PC-3 (cell line): ENCODE measurements at regions of chr3 and their contacts with region 1.

Region 1: GRCh38 chr3:45760878-45761711 is 35.2 kb downstream of the SLC6A20 start:
- DNase-seq: peak; percentile 69
- ATAC-seq: peak; percentile 94
- H3K4me3 ChIP-seq: no peak overlapping the region
- H3K27ac ChIP-seq: no peak overlapping the region
- H3K4me1 ChIP-seq: 0 out of 2 replicates have a peak, but pooled peaks cover 7% of the 10 kb centered on the region
- H3K27me3 ChIP-seq: no peaks in the 10 kb centered on the region
- CTCF ChIP-seq: peak; percentile 91

Region 2: GRCh38 chr3:45528429-45528828 is 232.7 kb before region 1 on chr3:
- CTCF ChIA-PET with region 1: no interaction called
- POLR2A ChIA-PET with region 1: no interaction called
- intact Hi-C with region 1: no loop called
- DNase-seq: peak; percentile 45
- ATAC-seq: peak; percentile 90
- H3K4me3 ChIP-seq: no peak overlapping the region
- H3K27ac ChIP-seq: peak overlapping the region; percentile 37; the same call in 1 of the 2 replicates
- H3K4me1 ChIP-seq: peaks cover 12% of the 10 kb centered on the region; the same call in 1 of the 2 replicates
- H3K27me3 ChIP-seq: no peaks in the 10 kb centered on the region
- CTCF ChIP-seq: no peak

Region 3: GRCh38 chr3:45724911-45725310 is 36.2 kb before region 1 on chr3:
- CTCF ChIA-PET with region 1: no interaction called
- POLR2A ChIA-PET with region 1: no interaction called
- intact Hi-C with region 1: no loop called
- DNase-seq: no peak
- ATAC-seq: no peak
- H3K4me3 ChIP-seq: no peak overlapping the region
- H3K27ac ChIP-seq: no peak overlapping the region
- H3K4me1 ChIP-seq: no peaks in the 10 kb centered on the region
- H3K27me3 ChIP-seq: no peaks in the 10 kb centered on the region
- CTCF ChIP-seq: no peak

Region 4: GRCh38 chr3:45817831-45818522 is 56.9 kb after region 1 on chr3:
- CTCF ChIA-PET with region 1: no interaction called
- POLR2A ChIA-PET with region 1: interaction called, 15 read pairs
- intact Hi-C with region 1: loop called (anchors 1 kb)
- DNase-seq: peak; percentile 97
- ATAC-seq: peak; percentile 74
- H3K4me3 ChIP-seq: no peak overlapping the region; the same call in 1 of the 2 replicates
- H3K27ac ChIP-seq: peak overlapping the region; percentile 85
- H3K4me1 ChIP-seq: peaks cover 40% of the 10 kb centered on the region
- H3K27me3 ChIP-seq: no peaks in the 10 kb centered on the region
- CTCF ChIP-seq: no peak

Region 5: DNA sequence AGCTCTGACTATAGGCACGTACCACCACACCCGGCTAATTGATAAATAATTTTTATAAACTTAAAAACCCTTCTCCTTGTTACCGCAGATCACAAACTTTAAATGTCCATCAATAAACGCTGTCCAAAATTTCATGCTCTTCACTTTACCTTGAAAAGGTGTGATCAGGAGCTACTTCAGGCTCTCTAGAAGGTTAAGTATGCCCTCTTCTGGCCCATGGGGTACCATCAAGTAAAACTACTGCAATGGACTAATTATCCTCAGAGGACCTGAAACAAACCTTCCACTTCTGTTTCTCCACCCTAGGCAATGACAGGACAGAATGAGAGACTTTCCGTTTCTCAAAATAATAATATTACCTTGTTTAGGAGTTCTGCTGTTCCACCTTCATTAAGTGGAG is 71.6 kb after region 1 on chr3:
- CTCF ChIA-PET with region 1: interaction called, 41 read pairs
- POLR2A ChIA-PET with region 1: no interaction called
- intact Hi-C with region 1: loop called (anchors 1 kb)
- DNase-seq: peak; percentile 63
- ATAC-seq: peak; percentile 83
- H3K4me3 ChIP-seq: no peak overlapping the region
- H3K27ac ChIP-seq: no peak overlapping the region
- H3K4me1 ChIP-seq: no peaks in the 10 kb centered on the region
- H3K27me3 ChIP-seq: no peaks in the 10 kb centered on the region
- CTCF ChIP-seq: peak; percentile 66

Region 6: GRCh38 chr3:45861043-45861719 is 100.1 kb after region 1 on chr3:
- CTCF ChIA-PET with region 1: no interaction called
- POLR2A ChIA-PET with region 1: no interaction called
- intact Hi-C with region 1: no loop called
- DNase-seq: no peak
- ATAC-seq: peak; percentile 51
- H3K4me3 ChIP-seq: no peak overlapping the region
- H3K27ac ChIP-seq: no peak overlapping the region
- H3K4me1 ChIP-seq: no peaks in the 10 kb centered on the region
- H3K27me3 ChIP-seq: no peaks in the 10 kb centered on the region
- CTCF ChIP-seq: no peak

Region 7: GRCh38 chr3:45906681-45907407 is 145.7 kb after region 1 on chr3:
- CTCF ChIA-PET with region 1: no interaction called
- POLR2A ChIA-PET with region 1: no interaction called
- intact Hi-C with region 1: loop called (anchors 1 kb)
- DNase-seq: peak; percentile 63
- ATAC-seq: peak; percentile 95
- H3K4me3 ChIP-seq: no peak overlapping the region
- H3K27ac ChIP-seq: no peak overlapping the region
- H3K4me1 ChIP-seq: no peaks in the 10 kb centered on the region
- H3K27me3 ChIP-seq: no peaks in the 10 kb centered on the region
- CTCF ChIP-seq: peak; percentile 83

Region 8: DNA sequence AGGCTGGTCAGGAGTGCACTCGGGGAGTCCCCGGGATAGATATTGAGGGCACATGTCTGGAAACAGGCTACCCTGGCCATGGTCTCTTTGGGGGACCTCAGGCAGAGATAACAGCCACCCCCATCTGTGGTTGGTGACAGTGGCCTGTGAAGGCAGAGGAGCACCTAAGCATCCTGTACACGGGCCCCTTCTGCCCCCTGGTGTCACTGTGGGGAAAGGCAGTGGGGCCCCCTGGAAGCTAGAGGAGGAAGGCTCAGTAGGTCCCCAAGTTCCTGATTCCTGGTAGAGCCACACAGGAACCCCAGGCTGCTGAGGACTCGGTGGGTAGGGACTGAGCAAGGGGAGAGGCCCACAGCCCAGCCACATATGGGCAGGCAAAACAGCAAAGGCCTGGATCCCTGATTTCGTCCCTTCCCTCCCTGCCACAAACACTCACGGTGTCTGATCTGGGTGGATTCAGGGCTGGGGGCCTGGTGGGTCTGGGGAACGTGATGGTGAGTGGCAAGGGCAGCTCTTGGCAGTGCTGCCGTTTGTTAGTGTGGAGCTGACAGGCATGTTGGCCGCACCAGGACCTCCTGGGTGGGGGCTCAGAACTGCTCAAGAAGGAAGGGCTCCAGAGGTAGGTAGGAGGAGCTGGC is 168.1 kb after region 1 on chr3:
- CTCF ChIA-PET with region 1: interaction called, 7 read pairs
- POLR2A ChIA-PET with region 1: interaction called, 11 read pairs
- intact Hi-C with region 1: loop called (anchors 1 kb)
- DNase-seq: peak; percentile 69
- ATAC-seq: peak; percentile 94
- H3K4me3 ChIP-seq: no peak overlapping the region
- H3K27ac ChIP-seq: no peak overlapping the region
- H3K4me1 ChIP-seq: no peaks in the 10 kb centered on the region
- H3K27me3 ChIP-seq: no peaks in the 10 kb centered on the region
- CTCF ChIP-seq: peak; percentile 92

Region 9: GRCh38 chr3:46378426-46378942 is 617.4 kb after region 1 on chr3:
- CTCF ChIA-PET with region 1: interaction called, 11 read pairs
- POLR2A ChIA-PET with region 1: no interaction called
- intact Hi-C with region 1: no loop called
- DNase-seq: peak; percentile 83
- ATAC-seq: peak; percentile 93
- H3K4me3 ChIP-seq: no peak overlapping the region
- H3K27ac ChIP-seq: no peak overlapping the region
- H3K4me1 ChIP-seq: peaks cover 10% of the 10 kb centered on the region
- H3K27me3 ChIP-seq: no peaks in the 10 kb centered on the region
- CTCF ChIP-seq: peak; percentile 97